Transverse colon (tissue), 4 donors: ENCODE measurements at regions of chr17 and their contacts with region 1.

Region 1: DNA sequence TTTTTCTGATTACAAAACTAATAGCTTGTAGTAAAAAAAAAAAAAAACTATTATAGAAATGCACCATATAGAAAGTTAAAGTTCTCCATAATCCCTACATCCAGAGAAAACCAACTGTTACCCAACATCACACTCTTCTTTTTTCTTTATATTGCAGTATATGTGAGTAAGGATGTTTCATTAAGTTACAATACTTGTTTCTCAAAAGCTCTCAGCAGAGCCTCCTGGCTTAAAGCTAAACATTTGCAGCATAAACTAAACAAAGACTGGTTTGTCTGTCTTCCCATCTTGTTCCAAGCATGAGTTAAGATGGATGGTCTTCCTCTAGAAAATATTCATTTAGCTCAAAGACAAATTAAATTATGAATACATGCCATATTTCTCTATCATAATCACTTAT is 25.2 kb downstream of the GRB2 start:
- DNase-seq: no peak
- H3K4me3 ChIP-seq: no peak overlapping the region
- H3K27ac ChIP-seq: peak overlapping the region in 1 of 4 donors; percentile 9
- H3K4me1 ChIP-seq: peaks cover 10 to 62% (median 31%) of the 10 kb centered on the region in 4 donors
- H3K27me3 ChIP-seq: no peaks in the 10 kb centered on the region
- CTCF ChIP-seq: no peak
- EP300 ChIP-seq: no peak
- POLR2A ChIP-seq: no peak

Region 2: DNA sequence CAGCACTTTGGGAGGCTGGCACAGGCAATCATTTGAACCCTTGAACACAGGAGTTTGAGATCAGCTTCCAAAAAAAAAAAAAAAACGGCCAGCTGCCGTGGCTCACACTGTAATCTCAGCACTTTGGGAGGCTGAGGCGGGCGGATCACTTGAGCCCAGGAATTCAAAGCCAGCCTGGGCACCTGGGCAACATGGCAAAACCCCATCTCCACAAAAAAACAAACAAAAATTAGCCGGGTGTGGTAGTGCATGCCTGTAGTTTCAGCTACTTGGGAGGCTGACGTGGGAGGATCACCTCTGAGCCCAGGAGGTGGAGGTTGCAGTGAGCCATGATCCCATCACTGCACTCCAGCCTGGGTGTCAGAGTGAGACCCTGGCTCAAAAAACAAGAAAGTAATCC is 13.9 kb before region 1 on chr17:
- in situ Hi-C with region 1: no loop called
- intact Hi-C with region 1: loop called (anchors 1 kb)
- DNase-seq: no peak
- H3K4me3 ChIP-seq: no peak overlapping the region
- H3K27ac ChIP-seq: no peak overlapping the region
- H3K4me1 ChIP-seq: peaks cover 12 to 82% (median 53%) of the 10 kb centered on the region in 4 donors
- H3K27me3 ChIP-seq: no peaks in the 10 kb centered on the region
- CTCF ChIP-seq: no peak
- EP300 ChIP-seq: no peak
- POLR2A ChIP-seq: no peak